Aorta (tissue), 5 donors: ENCODE measurements at regions of chr2 and their contacts with region 1.

Region 1: DNA sequence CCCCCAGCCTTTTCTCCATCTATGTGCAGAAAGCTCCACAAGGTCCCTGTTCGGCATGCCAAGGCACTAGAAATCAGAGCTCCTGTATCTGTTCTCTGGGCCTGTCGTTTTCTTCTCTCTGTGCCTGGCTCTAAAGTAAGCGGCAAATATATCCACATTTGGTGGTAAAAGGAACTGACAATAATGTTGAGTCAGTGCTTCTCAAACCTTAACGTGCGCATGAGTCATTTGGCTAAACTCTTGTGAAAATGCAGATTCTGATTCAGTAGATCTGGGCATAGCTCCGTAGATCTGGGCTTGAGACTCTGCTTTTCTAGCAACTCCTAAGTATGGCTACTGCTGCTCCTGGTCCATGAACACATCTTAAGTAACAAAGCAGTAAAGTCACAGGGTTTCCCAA is 16.5 kb upstream of the ACSL3 start:
- DNase-seq: no peak
- ATAC-seq: peak; percentile 64
- H3K4me3 ChIP-seq: no peak overlapping the region
- H3K27ac ChIP-seq: peak overlapping the region in 1 of 2 donors; percentile 51
- H3K4me1 ChIP-seq: peaks cover 0 to 1% of the 10 kb centered on the region in 2 donors
- H3K27me3 ChIP-seq: no peaks in the 10 kb centered on the region

Region 2: DNA sequence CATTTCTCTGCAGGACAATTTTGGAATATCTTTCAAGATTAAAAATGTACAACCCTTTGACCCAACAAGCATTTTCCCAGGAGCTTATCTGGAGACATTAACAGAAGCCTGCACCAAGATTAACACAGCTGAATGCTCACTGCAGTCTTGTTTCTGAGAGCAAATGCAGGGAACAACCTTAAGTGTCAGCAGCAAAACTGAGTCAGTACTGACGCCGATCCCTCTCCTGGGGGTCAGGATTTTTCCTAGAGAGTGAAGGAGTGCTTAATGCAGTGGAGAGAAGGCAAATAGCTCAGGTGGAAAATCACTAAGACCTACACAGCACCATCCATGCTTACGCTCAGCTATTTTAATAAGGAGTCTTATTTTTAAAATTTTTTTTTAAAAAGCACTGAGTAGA is 462.8 kb before region 1 on chr2:
- intact Hi-C with region 1: no loop called
- DNase-seq: no peak
- ATAC-seq: no peak
- H3K4me3 ChIP-seq: no peak overlapping the region
- H3K27ac ChIP-seq: no peak overlapping the region
- H3K4me1 ChIP-seq: no peaks in the 10 kb centered on the region
- H3K27me3 ChIP-seq: no peaks in the 10 kb centered on the region

Region 3: GRCh38 chr2:222802514-222803196 is 41.7 kb before region 1 on chr2:
- intact Hi-C with region 1: loop called in 1 of 2 experiments (anchors 5 kb)
- DNase-seq: no peak
- ATAC-seq: no peak
- H3K4me3 ChIP-seq: no peak overlapping the region
- H3K27ac ChIP-seq: no peak overlapping the region
- H3K4me1 ChIP-seq: no peaks in the 10 kb centered on the region
- H3K27me3 ChIP-seq: no peaks in the 10 kb centered on the region

Region 4: GRCh38 chr2:222903234-222904220 is 59.2 kb after region 1 on chr2:
- intact Hi-C with region 1: no loop called
- DNase-seq: no peak
- ATAC-seq: peak; percentile 79
- H3K4me3 ChIP-seq: no peak overlapping the region
- H3K27ac ChIP-seq: peak overlapping the region in 1 of 2 donors; percentile 71
- H3K4me1 ChIP-seq: peaks cover 6 to 10% of the 10 kb centered on the region in 2 donors
- H3K27me3 ChIP-seq: no peaks in the 10 kb centered on the region